Activated T-helper 1 cell treated with anti-CD3 and anti-CD28 coated beads, Interleukin-12 subunit alpha, Interleukin-12 subunit beta, Interleukin-2, Interleukin-4 antibody, amounts not matched to agents 30 ng/mL and 10 ng/mL and 1 ng/mL, durations not matched to agents 14 hours and 24 hours and 36 hours (primary cell): ENCODE measurements at regions of chr10 and their contacts with region 1.

Region 1: DNA sequence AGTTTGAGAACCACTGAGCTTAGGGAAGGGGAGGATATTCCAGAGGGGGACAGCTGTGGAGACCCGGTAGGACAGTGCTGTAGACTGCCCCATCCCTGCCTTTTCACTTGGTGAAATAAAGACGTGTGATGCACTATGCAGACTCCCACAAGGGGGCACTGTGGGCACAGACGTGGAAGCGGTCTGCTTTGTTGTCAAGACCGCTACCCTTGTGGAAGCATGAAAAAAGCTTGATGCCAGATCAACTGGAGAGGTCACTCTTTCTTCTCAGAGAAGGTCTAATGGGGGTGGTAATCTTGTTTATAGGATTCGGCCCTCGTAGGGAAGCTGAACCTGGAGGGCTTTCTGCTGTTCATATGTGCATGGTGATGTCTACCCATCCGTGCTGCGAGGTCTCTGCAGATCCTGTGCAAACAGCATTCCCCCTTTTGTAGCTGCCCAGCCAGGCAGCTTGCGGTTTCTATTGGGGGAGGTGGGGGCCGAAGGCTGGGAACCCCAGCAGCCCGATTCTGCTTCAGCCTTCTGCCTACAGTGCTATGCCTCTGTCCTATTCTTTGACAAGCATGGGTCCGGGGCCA is 13.7 kb downstream of the RPS24 start:
- DNase-seq: peak; percentile 61
- H3K4me3 Mint-ChIP-seq: no peak overlapping the region
- H3K27ac Mint-ChIP-seq: no peak overlapping the region
- H3K4me1 Mint-ChIP-seq: peaks cover 30% of the 10 kb centered on the region
- H3K27me3 Mint-ChIP-seq: no peaks in the 10 kb centered on the region

Region 2: GRCh38 chr10:78416111-78417011 is 369.0 kb after region 1 on chr10:
- intact Hi-C with region 1: loop called (anchors 10 kb)
- DNase-seq: no peak
- H3K4me3 Mint-ChIP-seq: no peak overlapping the region
- H3K27ac Mint-ChIP-seq: no peak overlapping the region
- H3K4me1 Mint-ChIP-seq: no peaks in the 10 kb centered on the region
- H3K27me3 Mint-ChIP-seq: peaks cover 3% of the 10 kb centered on the region

Region 3: GRCh38 chr10:78510566-78511323 is 463.3 kb after region 1 on chr10:
- intact Hi-C with region 1: loop called (anchors 10 kb)
- DNase-seq: no peak
- H3K4me3 Mint-ChIP-seq: no peak overlapping the region
- H3K27ac Mint-ChIP-seq: peak overlapping the region; percentile 13
- H3K4me1 Mint-ChIP-seq: peaks cover 3% of the 10 kb centered on the region
- H3K27me3 Mint-ChIP-seq: no peaks in the 10 kb centered on the region